PC-9 (cell line): ENCODE measurements at regions of chr10 and their contacts with region 1.

Region 1: DNA sequence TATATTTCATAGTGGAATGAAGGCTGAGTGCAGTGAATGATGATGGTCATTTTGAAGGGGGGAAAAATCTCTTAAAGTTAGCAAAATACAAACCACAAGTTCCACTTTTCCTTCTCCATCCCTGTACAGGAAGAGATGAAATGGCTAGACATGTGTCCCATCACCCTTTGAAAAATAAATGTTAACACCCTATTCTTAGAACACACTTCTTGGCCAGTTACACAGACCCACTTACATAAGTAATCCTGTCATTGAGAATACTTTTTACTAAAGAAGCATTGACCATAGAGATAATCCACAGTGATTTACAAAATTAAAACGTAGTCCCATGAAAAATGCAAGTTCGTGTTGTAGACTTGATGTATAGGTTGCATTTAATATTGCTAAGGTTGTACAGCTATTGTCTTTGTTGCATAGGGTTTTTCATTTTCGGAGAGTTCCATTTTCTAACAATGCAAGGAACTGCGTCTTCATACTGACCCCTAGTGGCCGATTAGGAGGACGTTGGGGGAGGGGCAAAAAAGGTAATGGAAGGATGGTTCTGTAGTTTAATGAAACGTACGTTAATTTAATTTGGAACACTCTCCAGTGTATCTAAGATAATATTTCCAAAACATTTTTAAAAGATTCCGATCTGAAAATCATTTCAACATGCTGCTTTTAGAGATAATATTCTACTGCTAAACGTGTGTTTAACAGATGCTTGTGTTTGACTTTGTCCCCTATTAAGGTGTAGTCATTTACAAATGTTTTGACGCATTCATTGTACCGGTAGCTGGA is 60.9 kb downstream of the ARMC3 start:
- DNase-seq: peak in 1 of 2 experiments; percentile 46
- H3K4me3 ChIP-seq: no peak overlapping the region
- H3K27ac ChIP-seq: no peak overlapping the region
- H3K4me1 ChIP-seq: no peaks in the 10 kb centered on the region
- H3K27me3 ChIP-seq: no peaks in the 10 kb centered on the region
- CTCF ChIP-seq: peak; percentile 87

Region 2: GRCh38 chr10:21278491-21279239 is 1710.1 kb before region 1 on chr10:
- CTCF ChIA-PET with region 1: no interaction called
- POLR2A ChIA-PET with region 1: no interaction called
- intact Hi-C with region 1: loop called (anchors 10 kb)
- DNase-seq: peak; percentile 71 to 90
- H3K4me3 ChIP-seq: no peak overlapping the region
- H3K27ac ChIP-seq: 0 out of 2 replicates have a peak overlapping the region, but pooled peaks have one; percentile 25
- H3K4me1 ChIP-seq: peaks cover 19% of the 10 kb centered on the region
- H3K27me3 ChIP-seq: no peaks in the 10 kb centered on the region
- CTCF ChIP-seq: peak; percentile 89

Region 3: DNA sequence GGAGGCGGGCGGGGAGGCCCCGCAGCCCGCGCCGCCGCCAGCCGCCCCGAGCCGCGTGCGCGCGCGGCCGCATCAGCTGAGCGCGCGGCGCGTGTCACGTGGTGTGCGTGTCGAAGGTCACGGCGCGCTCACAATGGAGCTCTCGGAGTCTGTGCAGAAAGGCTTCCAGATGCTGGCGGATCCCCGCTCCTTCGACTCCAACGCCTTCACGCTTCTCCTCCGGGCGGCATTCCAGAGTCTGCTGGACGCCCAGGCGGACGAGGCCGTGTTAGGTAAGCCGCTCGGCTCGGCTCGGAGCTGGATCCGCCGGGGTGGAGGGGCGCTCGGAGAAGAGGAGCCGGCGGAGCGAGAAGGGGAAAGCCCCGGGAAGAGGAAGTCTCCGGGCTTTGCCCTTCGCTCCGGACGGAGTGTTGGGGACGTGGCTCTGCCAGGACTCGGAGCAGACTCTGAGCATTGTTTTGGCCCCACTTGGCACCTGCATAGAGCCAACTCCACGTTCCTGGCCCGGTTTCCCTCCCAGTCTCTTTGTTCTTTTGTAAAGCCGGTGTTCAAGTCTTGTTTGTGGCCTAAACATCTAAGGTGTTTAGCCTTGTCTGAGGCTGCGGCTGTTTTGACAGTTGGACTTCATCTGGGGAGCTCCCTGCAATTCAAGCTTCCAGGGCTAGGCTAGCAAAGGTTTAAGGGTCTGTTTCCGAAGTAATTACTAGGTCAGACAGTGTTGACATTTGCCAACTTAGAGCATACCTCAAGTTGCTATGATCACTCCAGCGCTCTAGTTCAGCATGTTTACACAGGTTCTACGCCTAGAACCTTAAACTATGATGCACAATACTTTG is 672.3 kb before region 1 on chr10 and contains the start of gene COMMD3:
- CTCF ChIA-PET with region 1: no interaction called
- POLR2A ChIA-PET with region 1: no interaction called
- intact Hi-C with region 1: loop called (anchors 5 kb)
- DNase-seq: peak; percentile 55 to 77
- H3K4me3 ChIP-seq: peak within 1 kb of the TSS; percentile 67
- H3K27ac ChIP-seq: peak within 1 kb of the TSS; percentile 58
- H3K4me1 ChIP-seq: peaks cover 29% of the 10 kb centered on the region
- H3K27me3 ChIP-seq: no peaks in the 10 kb centered on the region
- CTCF ChIP-seq: no peak
- total RNA-seq, gene COMMD3: 38.1 and 43.5 TPM in 2 replicates

Region 4: GRCh38 chr10:22714479-22715289 is 274.1 kb before region 1 on chr10 and contains the start of gene PIP4K2A:
- CTCF ChIA-PET with region 1: no interaction called
- POLR2A ChIA-PET with region 1: no interaction called
- intact Hi-C with region 1: loop called (anchors 10 kb)
- DNase-seq: peak in 1 of 2 experiments; percentile 69
- H3K4me3 ChIP-seq: peak within 1 kb of the TSS; percentile 85
- H3K27ac ChIP-seq: no peak within 1 kb of the TSS
- H3K4me1 ChIP-seq: peaks cover 12% of the 10 kb centered on the region
- H3K27me3 ChIP-seq: no peaks in the 10 kb centered on the region
- CTCF ChIP-seq: no peak
- total RNA-seq, gene PIP4K2A: 16.1 and 21.4 TPM in 2 replicates

Region 5: DNA sequence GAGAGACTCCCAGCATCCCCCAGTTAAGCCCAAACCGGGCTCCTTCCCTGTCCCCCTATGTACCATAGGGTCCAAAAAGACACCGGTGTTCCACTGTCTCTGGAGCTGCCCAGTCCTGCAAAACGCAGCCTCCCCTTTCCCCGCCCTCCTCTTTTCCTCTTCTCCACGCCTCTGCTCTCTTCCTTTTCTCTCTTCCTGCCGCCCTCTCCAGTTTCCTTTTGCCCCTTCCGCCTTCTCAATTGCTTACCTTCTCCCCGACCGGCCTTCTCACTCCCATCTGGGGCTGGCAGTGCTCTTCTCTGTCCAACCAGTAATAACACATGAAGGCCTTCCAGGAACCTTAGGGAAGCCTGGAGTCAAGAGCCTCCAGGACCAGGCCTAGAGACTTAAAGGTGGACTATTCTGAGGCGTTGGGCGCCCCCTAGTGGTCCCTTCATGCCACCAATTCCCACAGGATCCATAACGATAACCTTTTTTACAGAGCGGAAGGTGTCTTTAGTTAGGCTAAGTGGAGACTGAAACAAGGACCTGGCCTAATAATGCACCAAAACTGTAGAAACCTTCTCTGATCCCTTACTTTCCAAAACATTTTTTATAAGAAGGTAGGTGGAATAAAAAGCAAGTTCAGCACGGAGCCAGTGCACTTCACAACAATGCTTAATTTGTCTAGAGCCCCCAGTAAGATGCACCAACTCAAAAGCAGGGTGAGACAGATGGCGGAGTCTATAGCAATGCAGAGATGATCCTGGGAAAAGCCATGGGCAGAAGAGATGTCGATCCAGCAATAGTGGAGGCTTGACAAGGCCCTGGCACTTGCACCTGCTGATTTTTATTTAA is 79.4 kb after region 1 on chr10:
- CTCF ChIA-PET with region 1: no interaction called
- POLR2A ChIA-PET with region 1: no interaction called
- intact Hi-C with region 1: loop called (anchors 1 kb)
- DNase-seq: peak; percentile 43 to 59
- H3K4me3 ChIP-seq: no peak overlapping the region
- H3K27ac ChIP-seq: no peak overlapping the region
- H3K4me1 ChIP-seq: no peaks in the 10 kb centered on the region
- H3K27me3 ChIP-seq: no peaks in the 10 kb centered on the region
- CTCF ChIP-seq: peak; percentile 84